ENCODE measurements at regions of chr4 and their contacts with region 1.

Region 1: DNA sequence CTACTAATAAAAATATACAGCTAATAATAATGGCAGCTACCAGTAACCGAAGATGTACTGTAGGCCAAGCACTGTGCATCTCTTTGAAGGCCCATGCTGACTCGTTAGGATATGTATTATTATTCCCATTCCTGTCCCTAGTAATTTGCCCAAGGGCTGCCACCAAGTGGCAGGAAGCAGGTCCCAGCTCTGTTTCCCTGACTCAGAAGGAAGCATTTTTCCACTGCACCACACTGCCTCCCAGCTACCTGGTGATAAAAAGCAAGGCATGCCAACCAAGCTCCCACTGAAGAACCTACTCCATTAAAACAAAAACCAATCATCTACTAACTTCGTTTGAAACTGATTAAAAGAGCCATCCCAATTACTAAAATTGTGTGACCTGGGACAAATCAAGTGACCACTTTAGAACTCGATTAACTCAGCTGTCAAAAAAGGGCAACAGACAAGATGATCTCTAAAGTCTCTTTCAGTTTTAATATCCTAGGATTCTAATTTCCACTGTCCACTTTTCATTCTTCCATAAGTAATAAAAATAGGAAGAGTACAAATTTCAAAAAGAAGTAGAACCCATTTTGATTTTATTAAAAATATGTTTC is 24.3 kb upstream of the PGM2 start:
- H3K4me3 ChIP-seq: no peak overlapping the region
- H3K27ac ChIP-seq: no peak overlapping the region
- H3K4me1 ChIP-seq: no peaks in the 10 kb centered on the region
- CTCF ChIP-seq: peak; percentile 57; the same call in 1 of the 2 replicates

Region 2: GRCh38 chr4:37603070-37603468 is 199.1 kb before region 1 on chr4:
- CTCF ChIA-PET with region 1: interaction called, 31 read pairs
- POLR2A ChIA-PET with region 1: no interaction called
- H3K4me3 ChIP-seq: no peak overlapping the region
- H3K27ac ChIP-seq: no peak overlapping the region
- H3K4me1 ChIP-seq: no peaks in the 10 kb centered on the region
- CTCF ChIP-seq: peak; percentile 80

Region 3: GRCh38 chr4:38034986-38035882 is 233.1 kb after region 1 on chr4:
- CTCF ChIA-PET with region 1: interaction called, 34 read pairs
- POLR2A ChIA-PET with region 1: no interaction called
- H3K4me3 ChIP-seq: no peak overlapping the region
- H3K27ac ChIP-seq: no peak overlapping the region
- H3K4me1 ChIP-seq: no peaks in the 10 kb centered on the region
- CTCF ChIP-seq: no peak

Measured in HEK293 (cell line).